Natural killer cell (primary cell): ENCODE measurements at regions of chr5 and their contacts with region 1.

Region 1: GRCh38 chr5:21121213-21121612 is 1133.2 kb upstream of the CDH18 start:
- DNase-seq: no peak
- ATAC-seq: no peak
- H3K4me3 ChIP-seq: no peak overlapping the region
- H3K4me3 Mint-ChIP-seq: no peak overlapping the region
- H3K27ac ChIP-seq: no peak overlapping the region
- H3K27ac Mint-ChIP-seq: no peak overlapping the region
- H3K4me1 ChIP-seq: no peaks in the 10 kb centered on the region
- H3K4me1 Mint-ChIP-seq: no peaks in the 10 kb centered on the region
- H3K27me3 ChIP-seq: no peaks in the 10 kb centered on the region
- H3K27me3 Mint-ChIP-seq: no peaks in the 10 kb centered on the region
- CTCF ChIP-seq: no peak

Region 2: GRCh38 chr5:21071986-21072385 is 49.2 kb before region 1 on chr5:
- intact Hi-C with region 1: no loop called
- DNase-seq: no peak
- ATAC-seq: no peak
- H3K4me3 ChIP-seq: no peak overlapping the region
- H3K4me3 Mint-ChIP-seq: no peak overlapping the region
- H3K27ac ChIP-seq: no peak overlapping the region
- H3K27ac Mint-ChIP-seq: no peak overlapping the region
- H3K4me1 ChIP-seq: no peaks in the 10 kb centered on the region
- H3K4me1 Mint-ChIP-seq: no peaks in the 10 kb centered on the region
- H3K27me3 ChIP-seq: no peaks in the 10 kb centered on the region
- H3K27me3 Mint-ChIP-seq: no peaks in the 10 kb centered on the region
- CTCF ChIP-seq: no peak

Region 3: DNA sequence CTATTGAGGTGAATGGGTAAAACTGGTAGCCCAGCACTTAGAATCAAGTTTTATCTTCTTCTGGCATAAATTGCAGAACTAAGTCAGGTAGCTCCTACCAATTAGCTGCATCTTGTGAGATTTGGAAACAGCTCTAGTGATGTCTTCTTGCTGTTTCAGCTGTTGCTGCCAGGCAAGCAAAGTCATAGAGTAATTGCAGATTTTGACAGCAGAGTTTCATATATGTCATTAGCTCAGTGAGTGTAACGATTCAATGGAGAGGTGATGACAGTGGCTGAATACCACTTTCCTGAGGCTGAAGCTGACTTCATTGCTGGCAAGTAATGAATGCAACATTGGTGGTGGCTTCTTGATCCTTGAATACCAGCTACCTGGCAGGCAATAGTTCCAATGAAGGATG is 23.6 kb before region 1 on chr5:
- intact Hi-C with region 1: loop called (anchors 2 kb)
- DNase-seq: no peak
- ATAC-seq: no peak
- H3K4me3 ChIP-seq: no peak overlapping the region
- H3K4me3 Mint-ChIP-seq: no peak overlapping the region
- H3K27ac ChIP-seq: no peak overlapping the region
- H3K27ac Mint-ChIP-seq: no peak overlapping the region
- H3K4me1 ChIP-seq: no peaks in the 10 kb centered on the region
- H3K4me1 Mint-ChIP-seq: no peaks in the 10 kb centered on the region
- H3K27me3 ChIP-seq: no peaks in the 10 kb centered on the region
- H3K27me3 Mint-ChIP-seq: no peaks in the 10 kb centered on the region
- CTCF ChIP-seq: no peak

Region 4: GRCh38 chr5:21236971-21237427 is 115.8 kb after region 1 on chr5:
- intact Hi-C with region 1: no loop called
- DNase-seq: no peak
- ATAC-seq: no peak
- H3K4me3 ChIP-seq: no peak overlapping the region
- H3K4me3 Mint-ChIP-seq: no peak overlapping the region
- H3K27ac ChIP-seq: no peak overlapping the region
- H3K27ac Mint-ChIP-seq: no peak overlapping the region
- H3K4me1 ChIP-seq: no peaks in the 10 kb centered on the region
- H3K4me1 Mint-ChIP-seq: no peaks in the 10 kb centered on the region
- H3K27me3 ChIP-seq: no peaks in the 10 kb centered on the region
- H3K27me3 Mint-ChIP-seq: no peaks in the 10 kb centered on the region
- CTCF ChIP-seq: no peak